ENCODE measurements at regions of chrX and their contacts with region 1.

Region 1: GRCh38 chrX:109485470-109486340 is 3.8 kb upstream of the GUCY2F start:
- DNase-seq: peak; percentile 33
- H3K4me3 ChIP-seq: no peak overlapping the region
- H3K27ac ChIP-seq: no peak overlapping the region
- H3K27me3 ChIP-seq: peaks cover 3% of the 10 kb centered on the region
- CTCF ChIP-seq: peak; percentile 87

Region 2: DNA sequence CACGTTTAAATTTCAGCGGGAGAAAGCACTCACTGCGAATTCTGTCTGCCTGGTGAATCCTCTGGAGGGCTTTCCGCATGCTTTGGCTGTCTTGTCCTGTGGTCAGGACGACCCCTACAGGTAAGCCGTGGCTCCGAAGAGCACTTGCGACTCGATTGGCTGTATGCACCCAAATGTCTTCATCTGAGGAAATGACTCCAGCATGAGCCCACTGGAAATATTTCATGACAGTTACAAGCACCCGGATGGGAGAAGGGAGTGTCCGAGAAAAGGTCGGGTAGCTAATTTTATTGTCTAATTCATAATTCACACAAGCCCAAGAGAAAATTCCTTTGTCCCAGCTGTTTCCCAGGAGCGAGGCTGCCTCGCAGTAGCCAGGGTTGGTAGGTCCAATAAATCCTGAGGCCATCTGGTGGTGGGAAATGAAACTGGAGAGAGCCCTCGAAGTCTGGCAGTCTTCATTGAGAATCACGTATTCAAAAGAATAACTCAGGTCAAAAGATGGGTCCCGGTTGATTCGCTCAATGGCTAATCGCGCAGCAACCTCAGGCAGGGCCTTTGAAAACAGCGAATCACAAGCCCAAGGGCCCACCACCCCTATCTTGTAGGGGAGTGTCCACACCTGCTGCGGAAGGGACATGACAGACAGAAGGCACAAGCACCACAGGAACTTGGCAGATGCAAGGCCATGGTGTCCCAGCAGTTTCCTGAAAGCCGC is 10.4 kb before region 1 on chrX:
- CTCF ChIA-PET with region 1: interaction called, 33 read pairs
- POLR2A ChIA-PET with region 1: no interaction called
- DNase-seq: peak; percentile 2
- H3K4me3 ChIP-seq: peak overlapping the region; percentile 27; the same call in 1 of the 2 replicates
- H3K27ac ChIP-seq: no peak overlapping the region
- H3K27me3 ChIP-seq: no peaks in the 10 kb centered on the region
- CTCF ChIP-seq: peak; percentile 60

Region 3: DNA sequence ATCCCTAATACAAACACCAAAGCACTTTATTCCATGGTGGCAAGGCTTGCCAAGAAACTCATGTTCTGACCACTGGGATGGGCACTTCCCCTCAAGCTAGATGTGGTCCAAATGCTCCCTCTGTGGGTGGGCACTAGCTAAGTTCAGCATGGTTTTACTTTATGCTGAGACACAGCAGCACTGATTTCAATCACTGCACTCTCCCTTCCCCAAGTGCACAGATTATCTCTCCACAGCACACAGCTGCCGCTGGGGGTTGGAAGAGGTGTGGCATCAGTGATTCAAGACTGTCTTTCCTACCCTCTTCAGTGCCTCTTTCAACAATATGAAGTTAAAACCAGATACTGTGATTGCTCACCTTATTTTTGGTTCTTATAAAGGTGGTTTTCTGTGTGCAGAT is 12.7 kb after region 1 on chrX:
- CTCF ChIA-PET with region 1: interaction called, 10 read pairs
- POLR2A ChIA-PET with region 1: no interaction called
- DNase-seq: no peak
- H3K4me3 ChIP-seq: no peak overlapping the region
- H3K27ac ChIP-seq: no peak overlapping the region
- H3K27me3 ChIP-seq: peaks cover 3% of the 10 kb centered on the region
- CTCF ChIP-seq: no peak

Region 4: DNA sequence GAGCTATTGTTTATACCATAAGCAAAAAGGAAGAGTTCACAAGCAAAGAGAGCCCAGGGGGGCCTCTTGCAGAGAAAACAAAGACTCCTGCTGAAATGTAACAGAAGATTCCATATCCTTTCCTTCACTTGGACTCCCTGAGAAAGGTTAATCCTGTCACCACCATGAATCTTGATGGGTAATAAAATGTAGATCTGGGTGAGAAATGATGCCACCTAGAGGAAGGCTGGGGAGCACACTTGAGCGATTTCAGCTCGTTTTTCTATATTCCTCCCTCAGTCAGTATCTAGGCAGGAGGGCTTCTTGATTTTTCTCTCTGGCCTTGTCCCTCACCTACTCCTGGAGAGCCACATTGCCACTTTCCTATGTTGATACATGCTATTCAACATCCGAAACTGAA is 149.5 kb after region 1 on chrX:
- CTCF ChIA-PET with region 1: interaction called, 43 read pairs
- POLR2A ChIA-PET with region 1: no interaction called
- DNase-seq: no peak
- H3K4me3 ChIP-seq: no peak overlapping the region
- H3K27ac ChIP-seq: no peak overlapping the region
- H3K27me3 ChIP-seq: no peaks in the 10 kb centered on the region
- CTCF ChIP-seq: peak; percentile 48

Region 5: GRCh38 chrX:109826954-109827708 is 341.4 kb after region 1 on chrX:
- CTCF ChIA-PET with region 1: no interaction called
- POLR2A ChIA-PET with region 1: no interaction called
- DNase-seq: peak; percentile 88
- H3K4me3 ChIP-seq: no peak overlapping the region
- H3K27ac ChIP-seq: peak overlapping the region; percentile 63
- H3K27me3 ChIP-seq: no peaks in the 10 kb centered on the region
- CTCF ChIP-seq: peak; percentile 27; the same call in 1 of the 2 replicates

Measured in AG04450 (cell line).